T-cell (primary cell): ENCODE measurements at regions of chr13 and their contacts with region 1.

Region 1: GRCh38 chr13:41456768-41457588 is at the start of gene RGCC:
- DNase-seq: peak; percentile 67 to 99 (median 91)
- ATAC-seq: peak; percentile 69 to 81 (median 72)
- H3K4me3 ChIP-seq: peak within 1 kb of the TSS; percentile 89 to 97
- H3K4me3 Mint-ChIP-seq: peak within 1 kb of the TSS; percentile 90 to 95 (median 92)
- H3K27ac ChIP-seq: peak within 1 kb of the TSS; percentile 92
- H3K27ac Mint-ChIP-seq: peak within 1 kb of the TSS; percentile 93 to 97
- H3K4me1 ChIP-seq: peaks cover 15 to 29% of the 10 kb centered on the region in 2 experiments
- H3K4me1 Mint-ChIP-seq: peaks cover 44 to 47% (median 45%) of the 10 kb centered on the region in 3 donors
- H3K27me3 ChIP-seq: no peaks in the 10 kb centered on the region
- H3K27me3 Mint-ChIP-seq: peaks cover 0 to 2% of the 10 kb centered on the region in 2 donors
- total RNA-seq, gene RGCC: 151 to 515 (median 166) TPM

Region 2: GRCh38 chr13:41271456-41272285 is 185.3 kb before region 1 on chr13:
- CTCF ChIA-PET with region 1: no interaction called
- POLR2A ChIA-PET with region 1: no interaction called
- DNase-seq: peak in 14 of 35 experiments; percentile 1 to 49 (median 16)
- ATAC-seq: peak; percentile 82 to 91 (median 86)
- H3K4me3 ChIP-seq: peak overlapping the region in 1 of 2 donors; percentile 40
- H3K4me3 Mint-ChIP-seq: peak overlapping the region in 2 of 3 donors; percentile 49 to 69
- H3K27ac ChIP-seq: peak overlapping the region; percentile 53
- H3K27ac Mint-ChIP-seq: peak overlapping the region; percentile 96 to 97
- H3K4me1 ChIP-seq: peaks cover 12 to 18% of the 10 kb centered on the region in 2 experiments
- H3K4me1 Mint-ChIP-seq: peaks cover 21 to 29% (median 26%) of the 10 kb centered on the region in 3 donors
- H3K27me3 ChIP-seq: no peaks in the 10 kb centered on the region
- H3K27me3 Mint-ChIP-seq: no peaks in the 10 kb centered on the region

Region 3: GRCh38 chr13:41443966-41444365 is 13.0 kb before region 1 on chr13:
- CTCF ChIA-PET with region 1: no interaction called
- POLR2A ChIA-PET with region 1: no interaction called
- DNase-seq: no peak
- ATAC-seq: no peak
- H3K4me3 ChIP-seq: no peak overlapping the region
- H3K4me3 Mint-ChIP-seq: no peak overlapping the region
- H3K27ac ChIP-seq: no peak overlapping the region
- H3K27ac Mint-ChIP-seq: no peak overlapping the region
- H3K4me1 ChIP-seq: no peaks in the 10 kb centered on the region
- H3K4me1 Mint-ChIP-seq: no peaks in the 10 kb centered on the region
- H3K27me3 ChIP-seq: no peaks in the 10 kb centered on the region
- H3K27me3 Mint-ChIP-seq: no peaks in the 10 kb centered on the region

Region 4: GRCh38 chr13:41471785-41472184 is 14.8 kb after region 1 on chr13:
- CTCF ChIA-PET with region 1: interaction called, 4 to 11 read pairs
- POLR2A ChIA-PET with region 1: interaction called, 11 to 54 read pairs
- DNase-seq: peak in 1 of 35 experiments; percentile 16
- ATAC-seq: peak in 1 of 4 experiments; percentile 23
- H3K4me3 ChIP-seq: no peak overlapping the region
- H3K4me3 Mint-ChIP-seq: peak overlapping the region in 1 of 3 donors; percentile 10
- H3K27ac ChIP-seq: no peak overlapping the region
- H3K27ac Mint-ChIP-seq: peak overlapping the region; percentile 66 to 78
- H3K4me1 ChIP-seq: peaks cover 10 to 27% of the 10 kb centered on the region in 2 experiments
- H3K4me1 Mint-ChIP-seq: peaks cover 74 to 85% (median 75%) of the 10 kb centered on the region in 3 donors
- H3K27me3 ChIP-seq: no peaks in the 10 kb centered on the region
- H3K27me3 Mint-ChIP-seq: no peaks in the 10 kb centered on the region

Region 5: GRCh38 chr13:41492404-41493260 is 35.7 kb after region 1 on chr13:
- CTCF ChIA-PET with region 1: interaction called, 8 to 14 read pairs
- POLR2A ChIA-PET with region 1: interaction called, 8 to 14 read pairs
- DNase-seq: peak in 23 of 35 experiments; percentile 4 to 76 (median 29)
- ATAC-seq: peak; percentile 78 to 88 (median 82)
- H3K4me3 ChIP-seq: peak overlapping the region in 1 of 2 donors; percentile 33
- H3K4me3 Mint-ChIP-seq: peak overlapping the region; percentile 62 to 67 (median 65)
- H3K27ac ChIP-seq: peak overlapping the region; percentile 92
- H3K27ac Mint-ChIP-seq: peak overlapping the region; percentile 99
- H3K4me1 ChIP-seq: peaks cover 43 to 59% of the 10 kb centered on the region in 2 experiments
- H3K4me1 Mint-ChIP-seq: peaks cover 79 to 87% (median 83%) of the 10 kb centered on the region in 3 donors
- H3K27me3 ChIP-seq: no peaks in the 10 kb centered on the region
- H3K27me3 Mint-ChIP-seq: no peaks in the 10 kb centered on the region

Region 6: GRCh38 chr13:42048682-42049453 is 591.9 kb after region 1 on chr13:
- CTCF ChIA-PET with region 1: interaction called in 1 of 2 experiments, 17 read pairs
- POLR2A ChIA-PET with region 1: no interaction called
- DNase-seq: peak in 21 of 35 experiments; percentile 13 to 68 (median 32)
- ATAC-seq: peak; percentile 72 to 75 (median 73)
- H3K4me3 ChIP-seq: peak overlapping the region; percentile 87
- H3K4me3 Mint-ChIP-seq: peak overlapping the region; percentile 83 to 89 (median 88)
- H3K27ac ChIP-seq: no peak overlapping the region
- H3K27ac Mint-ChIP-seq: no peak overlapping the region
- H3K4me1 ChIP-seq: peaks cover 3 to 17% of the 10 kb centered on the region in 2 experiments
- H3K4me1 Mint-ChIP-seq: peaks cover 8 to 23% (median 20%) of the 10 kb centered on the region in 3 donors
- H3K27me3 ChIP-seq: peaks cover 0 to 4% of the 10 kb centered on the region in 2 experiments
- H3K27me3 Mint-ChIP-seq: no peaks in the 10 kb centered on the region